ENCODE measurements at regions of chr5 and their contacts with region 1.

Region 1: GRCh38 chr5:57447658-57448057 is 35.0 kb downstream of the ACTBL2 start:
- DNase-seq: peak; percentile 76
- ATAC-seq: peak; percentile 38; the same call in 1 of the 2 replicates
- H3K4me3 ChIP-seq: no peak overlapping the region
- H3K27ac ChIP-seq: no peak overlapping the region
- H3K4me1 ChIP-seq: peaks cover 29% of the 10 kb centered on the region
- H3K27me3 ChIP-seq: no peaks in the 10 kb centered on the region
- CTCF ChIP-seq: no peak
- POLR2A ChIP-seq: no peak
- RAD21 ChIP-seq: no peak

Region 2: GRCh38 chr5:56080375-56081052 is 1367.1 kb before region 1 on chr5:
- CTCF ChIA-PET with region 1: no interaction called
- POLR2A ChIA-PET with region 1: no interaction called
- dilution Hi-C with region 1: no loop called
- in situ Hi-C with region 1: no loop called
- intact Hi-C with region 1: no loop called
- DNase-seq: no peak
- ATAC-seq: no peak
- H3K4me3 ChIP-seq: no peak overlapping the region
- H3K27ac ChIP-seq: peak overlapping the region; percentile 4; the same call in 1 of the 2 replicates
- H3K4me1 ChIP-seq: peaks cover 13% of the 10 kb centered on the region; the same call in 1 of the 2 replicates
- H3K27me3 ChIP-seq: no peaks in the 10 kb centered on the region
- CTCF ChIP-seq: no peak
- POLR2A ChIP-seq: no peak
- RAD21 ChIP-seq: no peak

Region 3: DNA sequence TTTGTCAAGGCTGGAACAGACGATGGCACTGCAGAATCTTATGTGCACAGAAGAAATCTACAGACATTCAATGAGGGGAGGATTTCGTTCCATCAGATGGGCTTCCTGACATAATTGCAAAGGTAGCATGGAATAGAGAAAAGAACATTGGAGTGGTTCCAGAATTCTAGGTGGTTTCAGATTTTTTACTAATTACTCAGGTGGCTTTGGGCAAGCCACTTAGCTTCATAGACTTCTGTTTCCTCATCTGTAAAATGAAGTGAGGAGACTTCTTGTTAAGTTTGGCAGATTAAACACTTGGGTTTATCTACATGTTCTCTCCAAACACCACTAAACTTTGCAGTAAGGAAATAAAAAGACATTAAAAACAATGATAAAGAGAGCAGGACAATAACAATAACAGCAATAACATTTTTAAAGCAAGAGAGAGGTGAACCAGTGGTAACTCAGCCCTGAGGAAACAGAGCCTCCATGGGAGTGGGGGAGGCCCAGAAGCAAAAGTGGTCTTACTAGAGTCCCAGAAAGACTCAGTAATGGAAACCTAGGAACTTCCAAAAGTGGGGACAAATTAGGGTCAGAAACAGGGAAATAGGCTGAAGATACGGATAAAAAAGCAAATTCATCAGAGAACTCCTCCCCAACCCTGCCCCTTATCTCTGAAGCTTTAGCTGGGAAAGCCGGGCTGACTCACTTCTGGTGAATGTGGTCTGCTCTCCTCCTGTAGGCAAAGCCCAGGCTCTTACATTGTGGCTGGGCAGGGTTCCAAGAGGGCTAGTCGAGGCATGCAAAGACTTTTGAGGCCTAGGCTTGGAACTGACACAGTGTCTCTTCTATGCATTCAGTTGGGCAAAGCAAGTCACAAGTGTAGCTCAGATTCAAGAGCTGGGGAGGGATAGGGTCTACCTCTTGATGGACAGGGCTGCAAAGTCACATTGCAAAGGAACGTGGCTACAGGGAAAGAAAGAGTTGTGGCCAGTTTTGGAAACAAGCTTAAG is 46.7 kb after region 1 on chr5:
- CTCF ChIA-PET with region 1: no interaction called
- POLR2A ChIA-PET with region 1: no interaction called
- dilution Hi-C with region 1: no loop called
- in situ Hi-C with region 1: no loop called
- intact Hi-C with region 1: loop called (anchors 5 kb)
- DNase-seq: peak; percentile 98
- ATAC-seq: peak; percentile 97
- H3K4me3 ChIP-seq: no peak overlapping the region
- H3K27ac ChIP-seq: peak overlapping the region; percentile 88
- H3K4me1 ChIP-seq: peaks cover 16% of the 10 kb centered on the region
- H3K27me3 ChIP-seq: no peaks in the 10 kb centered on the region
- CTCF ChIP-seq: no peak
- POLR2A ChIP-seq: no peak
- RAD21 ChIP-seq: peak; percentile 43

Measured in IMR-90 (cell line).